ENCODE measurements at regions of chr14 and their contacts with region 1.

Region 1: GRCh38 chr14:44912041-44912869 is 49.5 kb downstream of the KLHL28 start:
- DNase-seq: peak in 2 of 3 donors; percentile 9 to 33
- H3K4me3 ChIP-seq: peak overlapping the region in 5 of 7 experiments; percentile 19 to 65 (median 57)
- H3K27ac ChIP-seq: no peak overlapping the region
- H3K4me1 ChIP-seq: peaks cover 0 to 7% (median 5%) of the 10 kb centered on the region in 4 experiments
- H3K27me3 ChIP-seq: peaks cover 2 to 42% (median 16%) of the 10 kb centered on the region in 5 experiments

Region 2: GRCh38 chr14:44961604-44962333 is 49.5 kb after region 1 on chr14 and contains the starts of genes KLHL28 and TOGARAM1:
- CTCF ChIA-PET with region 1: interaction called, 18 read pairs
- POLR2A ChIA-PET with region 1: interaction called, 3 read pairs
- DNase-seq: peak; percentile 100
- H3K4me3 ChIP-seq: peak within 1 kb of the TSS; percentile 93 to 100 (median 98)
- H3K27ac ChIP-seq: peak within 1 kb of the TSS; percentile 92 to 96
- H3K4me1 ChIP-seq: peaks cover 24 to 54% (median 43%) of the 10 kb centered on the region in 4 experiments
- H3K27me3 ChIP-seq: no peaks in the 10 kb centered on the region

Region 3: GRCh38 chr14:45060551-45060950 is 148.3 kb after region 1 on chr14:
- CTCF ChIA-PET with region 1: no interaction called
- POLR2A ChIA-PET with region 1: no interaction called
- DNase-seq: no peak
- H3K4me3 ChIP-seq: no peak overlapping the region
- H3K27ac ChIP-seq: no peak overlapping the region
- H3K4me1 ChIP-seq: no peaks in the 10 kb centered on the region
- H3K27me3 ChIP-seq: no peaks in the 10 kb centered on the region

Region 4: DNA sequence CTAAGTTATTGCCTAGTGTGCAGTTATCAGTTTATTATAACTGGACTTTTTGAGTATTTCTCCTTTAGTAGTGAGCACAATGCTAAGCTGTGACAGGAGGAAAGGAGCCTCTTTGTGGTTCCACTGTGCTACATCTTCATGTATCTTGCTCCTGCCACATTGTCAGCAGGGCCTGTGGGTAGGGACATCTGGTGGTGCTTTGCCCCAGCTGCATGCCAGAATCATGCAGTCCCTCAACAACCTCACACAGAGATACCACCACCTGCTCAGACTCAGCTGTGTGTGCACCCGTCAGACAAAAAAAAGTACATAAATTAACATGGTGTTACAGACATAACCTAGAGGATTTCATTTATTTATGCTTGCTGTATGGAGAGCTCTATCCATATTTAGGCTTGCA is 289.6 kb after region 1 on chr14:
- CTCF ChIA-PET with region 1: interaction called, 20 read pairs
- POLR2A ChIA-PET with region 1: no interaction called
- DNase-seq: peak; percentile 47 to 94 (median 89)
- H3K4me3 ChIP-seq: no peak overlapping the region
- H3K27ac ChIP-seq: peak overlapping the region in 1 of 2 experiments; percentile 44
- H3K4me1 ChIP-seq: peaks cover 0 to 11% (median 7%) of the 10 kb centered on the region in 4 experiments
- H3K27me3 ChIP-seq: no peaks in the 10 kb centered on the region

Region 5: GRCh38 chr14:45267071-45267470 is 354.8 kb after region 1 on chr14:
- CTCF ChIA-PET with region 1: interaction called, 21 read pairs
- POLR2A ChIA-PET with region 1: no interaction called
- DNase-seq: no peak
- H3K4me3 ChIP-seq: no peak overlapping the region
- H3K27ac ChIP-seq: no peak overlapping the region
- H3K4me1 ChIP-seq: no peaks in the 10 kb centered on the region
- H3K27me3 ChIP-seq: no peaks in the 10 kb centered on the region

Measured in common myeloid progenitor, CD34-positive (primary cell).